Mammary epithelial cell (primary cell): ENCODE measurements at regions of chr1 and their contacts with region 1.

Region 1: GRCh38 chr1:30645807-30646206 is 77.6 kb downstream of the MATN1 start:
- DNase-seq: peak; percentile 90
- H3K4me3 ChIP-seq: no peak overlapping the region
- H3K27ac ChIP-seq: no peak overlapping the region
- H3K4me1 ChIP-seq: peaks cover 37% of the 10 kb centered on the region
- H3K27me3 ChIP-seq: no peaks in the 10 kb centered on the region
- CTCF ChIP-seq: no peak

Region 2: DNA sequence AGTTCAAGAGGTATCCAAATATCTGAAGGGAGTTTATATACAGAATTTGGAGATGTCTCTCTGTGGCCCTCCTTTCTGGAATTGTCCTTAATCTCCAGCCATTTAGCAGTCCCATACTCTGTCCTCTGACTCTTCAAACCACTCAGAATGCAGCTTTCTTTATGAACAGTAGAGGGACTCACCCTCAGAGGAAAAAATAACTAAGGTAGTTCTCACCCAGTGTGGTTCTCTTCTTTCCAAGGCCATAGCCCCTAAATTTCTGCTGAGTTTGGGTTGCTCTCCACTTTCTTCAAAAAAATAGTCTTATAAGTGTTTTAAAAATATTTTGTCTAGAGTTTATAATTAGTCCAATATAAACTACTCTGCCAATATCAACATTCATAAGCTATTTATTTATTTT is 292.2 kb before region 1 on chr1:
- CTCF ChIA-PET with region 1: no interaction called
- dilution Hi-C with region 1: no loop called
- in situ Hi-C with region 1: no loop called
- intact Hi-C with region 1: no loop called
- DNase-seq: no peak
- H3K4me3 ChIP-seq: no peak overlapping the region
- H3K27ac ChIP-seq: no peak overlapping the region
- H3K4me1 ChIP-seq: no peaks in the 10 kb centered on the region
- H3K27me3 ChIP-seq: no peaks in the 10 kb centered on the region
- CTCF ChIP-seq: peak; percentile 26 to 68

Region 3: GRCh38 chr1:30379684-30380624 is 265.9 kb before region 1 on chr1:
- CTCF ChIA-PET with region 1: no interaction called
- dilution Hi-C with region 1: no loop called
- in situ Hi-C with region 1: no loop called
- intact Hi-C with region 1: loop called (anchors 5 kb)
- DNase-seq: peak; percentile 68
- H3K4me3 ChIP-seq: no peak overlapping the region
- H3K27ac ChIP-seq: no peak overlapping the region
- H3K4me1 ChIP-seq: peaks cover 23% of the 10 kb centered on the region
- H3K27me3 ChIP-seq: no peaks in the 10 kb centered on the region
- CTCF ChIP-seq: peak; percentile 89 to 93

Region 4: DNA sequence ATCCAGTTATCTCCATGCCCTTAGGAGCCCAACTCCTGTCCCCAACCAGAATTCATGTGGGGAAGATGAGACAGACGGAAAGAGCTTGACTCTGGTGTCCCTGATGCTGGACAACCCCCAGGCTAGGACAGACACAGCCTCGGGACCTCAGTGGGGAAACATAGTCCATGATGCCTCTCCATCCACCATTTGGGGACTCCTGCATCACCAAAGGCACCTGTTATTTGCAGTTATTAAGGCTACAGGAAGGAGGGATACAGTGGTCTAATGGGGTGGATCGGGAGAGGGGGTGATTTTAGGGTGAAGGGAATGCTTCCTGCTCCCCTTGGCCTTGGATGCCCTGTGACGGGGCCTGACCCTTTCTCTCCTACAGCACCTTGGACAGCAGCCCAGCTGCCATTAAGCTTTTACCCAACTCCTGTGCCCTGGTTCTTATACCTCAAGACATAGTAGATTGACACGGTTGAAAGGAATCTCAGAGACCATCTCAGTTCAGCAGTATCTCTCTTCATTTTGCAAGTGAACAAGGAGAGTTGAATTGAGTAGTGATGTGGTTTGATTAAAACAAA is 34.0 kb before region 1 on chr1:
- CTCF ChIA-PET with region 1: no interaction called
- dilution Hi-C with region 1: no loop called
- in situ Hi-C with region 1: no loop called
- intact Hi-C with region 1: loop called (anchors 1 kb)
- DNase-seq: no peak
- H3K4me3 ChIP-seq: no peak overlapping the region
- H3K27ac ChIP-seq: no peak overlapping the region
- H3K4me1 ChIP-seq: peaks cover 40% of the 10 kb centered on the region
- H3K27me3 ChIP-seq: no peaks in the 10 kb centered on the region
- CTCF ChIP-seq: no peak

Region 5: GRCh38 chr1:30618335-30618747 is 27.5 kb before region 1 on chr1:
- CTCF ChIA-PET with region 1: no interaction called
- dilution Hi-C with region 1: no loop called
- in situ Hi-C with region 1: no loop called
- intact Hi-C with region 1: loop called (anchors 1 kb)
- DNase-seq: peak; percentile 88
- H3K4me3 ChIP-seq: no peak overlapping the region
- H3K27ac ChIP-seq: peak overlapping the region; percentile 74
- H3K4me1 ChIP-seq: peaks cover 46% of the 10 kb centered on the region
- H3K27me3 ChIP-seq: no peaks in the 10 kb centered on the region
- CTCF ChIP-seq: no peak

Region 6: GRCh38 chr1:30670240-30671060 is 24.6 kb after region 1 on chr1:
- CTCF ChIA-PET with region 1: no interaction called
- dilution Hi-C with region 1: no loop called
- in situ Hi-C with region 1: no loop called
- intact Hi-C with region 1: loop called (anchors 1 kb)
- DNase-seq: peak; percentile 61
- H3K4me3 ChIP-seq: no peak overlapping the region
- H3K27ac ChIP-seq: peak overlapping the region; percentile 48
- H3K4me1 ChIP-seq: peaks cover 24% of the 10 kb centered on the region
- H3K27me3 ChIP-seq: no peaks in the 10 kb centered on the region
- CTCF ChIP-seq: no peak

Region 7: DNA sequence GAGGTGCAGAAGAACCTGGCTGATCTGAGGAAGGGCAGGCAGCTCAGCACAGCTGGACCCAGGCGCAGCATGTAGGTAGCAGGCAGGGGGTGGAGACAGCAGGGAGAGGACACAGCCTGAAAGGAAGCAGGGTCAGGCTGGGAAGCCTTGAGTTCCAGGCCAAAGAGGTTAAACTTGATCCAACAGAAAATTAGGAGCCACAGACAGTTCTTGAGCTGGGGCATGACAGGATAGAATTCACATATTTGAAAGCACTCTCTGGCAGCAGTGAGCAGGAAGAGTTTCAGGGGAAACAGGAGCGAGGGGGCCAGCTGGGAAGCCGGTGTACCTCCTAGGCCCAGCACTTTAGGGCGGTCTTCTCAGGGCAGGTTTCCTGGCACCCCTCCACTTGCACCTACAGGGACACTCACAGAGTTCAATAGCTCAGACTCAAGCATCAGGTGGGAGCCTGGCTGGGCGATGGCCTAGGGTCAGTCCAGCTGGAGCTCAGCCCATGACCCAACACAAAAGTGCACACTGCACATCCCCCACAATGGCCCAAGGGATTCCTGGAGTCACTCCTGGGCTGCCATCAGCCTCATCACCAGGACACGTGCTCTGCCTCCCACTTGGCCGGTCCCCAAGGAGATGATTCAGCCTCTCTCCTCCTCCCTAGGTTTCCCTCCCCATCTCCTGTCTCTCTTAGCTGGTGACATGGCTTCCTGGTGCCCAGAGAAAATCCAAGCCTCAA is 54.9 kb after region 1 on chr1:
- CTCF ChIA-PET with region 1: no interaction called
- dilution Hi-C with region 1: no loop called
- in situ Hi-C with region 1: no loop called
- intact Hi-C with region 1: loop called (anchors 2 kb)
- DNase-seq: peak; percentile 68
- H3K4me3 ChIP-seq: no peak overlapping the region
- H3K27ac ChIP-seq: no peak overlapping the region
- H3K4me1 ChIP-seq: peaks cover 24% of the 10 kb centered on the region
- H3K27me3 ChIP-seq: no peaks in the 10 kb centered on the region
- CTCF ChIP-seq: no peak

Region 8: GRCh38 chr1:30779294-30780071 is 133.7 kb after region 1 on chr1:
- CTCF ChIA-PET with region 1: no interaction called
- dilution Hi-C with region 1: no loop called
- in situ Hi-C with region 1: no loop called
- intact Hi-C with region 1: no loop called
- DNase-seq: peak; percentile 65
- H3K4me3 ChIP-seq: no peak overlapping the region
- H3K27ac ChIP-seq: no peak overlapping the region
- H3K4me1 ChIP-seq: peaks cover 9% of the 10 kb centered on the region
- H3K27me3 ChIP-seq: no peaks in the 10 kb centered on the region
- CTCF ChIP-seq: peak; percentile 78 to 97